Panc1 (cell line): ENCODE measurements at regions of chr2 and their contacts with region 1.

Region 1: GRCh38 chr2:239096676-239097427 is 249.0 kb downstream of the TWIST2 start:
- DNase-seq: no peak
- ATAC-seq: no peak
- H3K4me3 ChIP-seq: no peak overlapping the region
- H3K27ac ChIP-seq: no peak overlapping the region
- H3K4me1 ChIP-seq: no peaks in the 10 kb centered on the region
- H3K27me3 ChIP-seq: no peaks in the 10 kb centered on the region
- CTCF ChIP-seq: no peak

Region 2: GRCh38 chr2:238970553-238971081 is 126.2 kb before region 1 on chr2:
- CTCF ChIA-PET with region 1: no interaction called
- POLR2A ChIA-PET with region 1: no interaction called
- in situ Hi-C with region 1: no loop called
- intact Hi-C with region 1: no loop called
- DNase-seq: no peak
- ATAC-seq: peak; percentile 63
- H3K4me3 ChIP-seq: no peak overlapping the region
- H3K27ac ChIP-seq: peak overlapping the region; percentile 48; the same call in 1 of the 2 replicates
- H3K4me1 ChIP-seq: peaks cover 23% of the 10 kb centered on the region
- H3K27me3 ChIP-seq: no peaks in the 10 kb centered on the region
- CTCF ChIP-seq: peak; percentile 99

Region 3: DNA sequence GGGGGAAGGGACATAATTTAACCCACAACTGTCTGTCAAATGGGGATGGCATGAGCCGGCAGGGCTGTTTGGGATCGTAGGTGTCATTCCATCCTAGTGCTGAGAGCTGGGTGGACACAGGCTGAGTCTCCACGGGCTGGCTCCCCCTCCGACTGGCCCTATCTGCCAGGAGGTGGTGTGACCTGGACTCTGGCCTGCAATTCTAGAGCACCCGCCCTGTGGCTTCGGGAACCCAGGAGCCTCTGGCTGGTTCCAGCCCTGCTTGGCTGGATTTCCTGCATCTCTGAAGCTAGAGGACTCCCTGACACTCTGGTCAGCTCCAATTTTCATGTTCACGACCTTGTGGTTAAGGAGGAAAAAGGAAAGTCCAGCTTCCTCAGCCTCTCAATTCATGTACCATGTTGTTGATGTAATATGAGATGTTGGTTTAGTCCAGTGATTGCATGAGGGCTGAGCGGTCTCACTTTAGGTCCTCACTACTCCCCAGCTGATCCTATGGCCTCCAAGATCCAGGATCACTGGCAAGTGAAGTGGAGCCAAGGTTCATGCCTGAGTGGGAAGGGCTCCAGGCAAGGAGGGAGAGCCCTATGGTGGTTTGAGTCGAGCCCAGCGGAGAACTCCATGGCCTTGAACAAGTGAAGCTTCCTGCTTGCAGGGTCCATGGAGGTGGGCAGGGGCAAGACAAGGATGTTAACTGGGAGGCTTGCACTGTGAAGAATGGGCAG is 759.2 kb after region 1 on chr2:
- CTCF ChIA-PET with region 1: no interaction called
- POLR2A ChIA-PET with region 1: interaction called, 10 read pairs
- in situ Hi-C with region 1: no loop called
- intact Hi-C with region 1: no loop called
- DNase-seq: no peak
- ATAC-seq: no peak
- H3K4me3 ChIP-seq: no peak overlapping the region
- H3K27ac ChIP-seq: no peak overlapping the region
- H3K4me1 ChIP-seq: no peaks in the 10 kb centered on the region
- H3K27me3 ChIP-seq: peaks cover 15% of the 10 kb centered on the region
- CTCF ChIP-seq: no peak